Activated CD4-positive, alpha-beta memory T cell treated with anti-CD3 and anti-CD28 coated beads for 36 hours (primary cell): ENCODE measurements at regions of chr9 and their contacts with region 1.

Region 1: GRCh38 chr9:125391704-125392103 is 130.1 kb downstream of the GAPVD1 start:
- DNase-seq: no peak
- H3K4me3 Mint-ChIP-seq: no peak overlapping the region
- H3K27ac Mint-ChIP-seq: no peak overlapping the region
- H3K4me1 Mint-ChIP-seq: no peaks in the 10 kb centered on the region
- H3K27me3 Mint-ChIP-seq: no peaks in the 10 kb centered on the region

Region 2: GRCh38 chr9:125446581-125447094 is 54.9 kb after region 1 on chr9:
- CTCF ChIA-PET with region 1: no interaction called
- POLR2A ChIA-PET with region 1: no interaction called
- intact Hi-C with region 1: loop called (anchors 2 kb)
- DNase-seq: no peak
- H3K4me3 Mint-ChIP-seq: no peak overlapping the region
- H3K27ac Mint-ChIP-seq: no peak overlapping the region
- H3K4me1 Mint-ChIP-seq: no peaks in the 10 kb centered on the region
- H3K27me3 Mint-ChIP-seq: no peaks in the 10 kb centered on the region